GM13976 (cell line): ENCODE measurements at regions of chr7 and their contacts with region 1.

Region 1: DNA sequence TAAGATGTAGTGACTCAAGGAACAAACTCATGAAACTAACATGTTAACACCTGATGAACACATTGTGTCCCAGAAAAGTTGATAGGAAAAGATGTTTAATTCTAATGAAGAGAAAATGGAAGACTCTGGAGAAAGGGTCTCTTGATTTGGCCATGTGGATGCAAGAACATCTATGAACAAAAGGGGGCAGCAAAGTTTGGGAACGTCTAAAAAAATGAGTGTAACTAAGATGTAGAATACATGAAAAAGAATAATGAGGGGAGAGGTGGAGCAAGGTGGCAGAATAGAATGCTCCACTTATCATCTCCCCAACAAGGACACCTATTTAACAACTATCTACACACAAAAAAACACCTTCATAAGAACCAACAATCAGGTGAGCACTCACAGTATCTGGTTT is 805.1 kb downstream of the TNS3 start:
- DNase-seq: no peak
- CTCF ChIP-seq: no peak

Region 2: GRCh38 chr7:46881507-46882127 is 104.8 kb after region 1 on chr7:
- in situ Hi-C with region 1: loop called (anchors 25 kb)
- DNase-seq: no peak
- CTCF ChIP-seq: no peak